ENCODE measurements at regions of chr1 and their contacts with region 1.

Region 1: GRCh38 chr1:21963477-21964217 is 13.2 kb upstream of the CELA3B start:
- DNase-seq: peak; percentile 89
- ATAC-seq: peak; percentile 92

Region 2: DNA sequence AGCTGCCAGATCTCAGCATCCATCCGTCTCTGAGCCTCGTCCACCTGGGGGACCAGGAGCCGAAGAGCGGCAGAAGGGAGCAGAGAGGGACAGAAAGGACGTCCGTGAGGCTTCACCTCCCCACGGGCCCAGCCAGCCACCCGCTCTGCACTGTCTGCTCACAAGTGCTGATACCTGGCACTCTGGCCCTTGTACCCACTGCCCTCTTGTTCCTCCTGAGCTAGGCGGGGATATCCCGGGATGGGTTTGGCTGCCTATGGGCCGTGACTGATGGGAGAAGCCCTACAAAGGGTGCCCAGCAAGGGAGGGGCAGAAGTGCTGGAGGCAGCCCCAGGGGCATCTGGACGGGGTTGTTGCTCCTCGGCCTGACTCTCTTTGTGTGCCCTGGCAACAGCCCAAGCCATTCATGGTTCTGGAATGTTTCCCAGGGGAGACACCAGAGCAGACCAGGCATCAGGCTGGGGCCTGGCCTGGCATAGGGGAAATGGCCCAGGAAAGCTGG is 94.0 kb before region 1 on chr1:
- intact Hi-C with region 1: loop called (anchors 5 kb)
- DNase-seq: peak; percentile 82
- ATAC-seq: peak; percentile 81

Measured in Right ventricle myocardium inferior (tissue), 1 donor.